ENCODE measurements at regions of chr1 and their contacts with region 1.

Region 1: DNA sequence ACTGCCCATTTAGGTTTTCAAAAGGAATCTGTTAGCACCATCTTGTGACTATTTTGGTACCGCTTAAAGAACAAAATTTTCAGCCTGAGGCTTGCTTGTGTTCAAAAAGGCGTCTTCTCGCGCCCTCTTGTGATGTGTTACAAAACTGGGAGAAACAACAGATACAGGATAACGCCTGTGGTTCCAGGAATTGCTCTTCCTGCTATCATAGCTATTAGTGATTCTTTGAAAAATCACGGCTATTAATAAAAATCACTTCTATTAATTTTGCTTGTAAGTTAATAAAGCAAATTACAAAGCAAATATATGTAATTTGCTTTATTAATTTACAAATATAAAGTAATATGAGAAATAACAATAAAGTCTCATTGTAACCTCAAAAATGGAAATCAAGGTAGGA is 82.2 kb upstream of the ABCD3 start:
- DNase-seq: peak; percentile 95
- ATAC-seq: peak; percentile 89
- H3K4me3 ChIP-seq: no peak overlapping the region
- H3K27ac ChIP-seq: no peak overlapping the region
- H3K4me1 ChIP-seq: peaks cover 8% of the 10 kb centered on the region
- H3K27me3 ChIP-seq: peaks cover 16% of the 10 kb centered on the region
- CTCF ChIP-seq: peak; percentile 100
- POLR2A ChIP-seq: peak; percentile 58
- RAD21 ChIP-seq: peak; percentile 100

Region 2: GRCh38 chr1:93909146-93910050 is 426.6 kb before region 1 on chr1 and contains the start of gene GCLM:
- CTCF ChIA-PET with region 1: no interaction called
- POLR2A ChIA-PET with region 1: no interaction called
- dilution Hi-C with region 1: no loop called
- in situ Hi-C with region 1: no loop called
- intact Hi-C with region 1: loop called (anchors 2 kb)
- DNase-seq: peak; percentile 94
- ATAC-seq: peak; percentile 94
- H3K4me3 ChIP-seq: peak within 1 kb of the TSS; percentile 74
- H3K27ac ChIP-seq: peak within 1 kb of the TSS; percentile 32
- H3K4me1 ChIP-seq: peaks cover 4% of the 10 kb centered on the region
- H3K27me3 ChIP-seq: no peaks in the 10 kb centered on the region
- CTCF ChIP-seq: peak; percentile 98
- POLR2A ChIP-seq: peak; percentile 92
- RAD21 ChIP-seq: peak; percentile 41; the same call in 1 of the 2 replicates
- total RNA-seq, gene GCLM: 18.3 and 20.1 TPM in 2 replicates

Region 3: DNA sequence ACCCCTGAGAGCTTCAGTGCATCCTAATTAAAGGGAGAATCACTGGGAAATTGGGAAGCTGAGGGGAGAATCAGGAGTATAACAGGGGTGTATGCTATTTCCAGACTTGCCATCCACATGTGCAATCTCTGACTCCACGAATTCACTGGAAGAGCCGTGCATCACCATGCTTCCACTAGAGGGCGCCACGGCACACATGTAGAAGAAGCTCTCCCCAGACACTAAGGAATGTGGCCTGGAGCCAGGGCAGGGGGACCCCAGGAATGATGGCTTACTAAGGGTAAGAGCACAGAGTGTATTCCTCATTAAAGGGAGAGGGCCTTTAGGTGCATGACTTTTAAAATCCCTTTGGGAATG is 296.5 kb before region 1 on chr1:
- CTCF ChIA-PET with region 1: interaction called, 64 read pairs
- POLR2A ChIA-PET with region 1: no interaction called
- dilution Hi-C with region 1: no loop called
- in situ Hi-C with region 1: no loop called
- intact Hi-C with region 1: no loop called
- DNase-seq: peak; percentile 62
- ATAC-seq: peak; percentile 22; the same call in 1 of the 2 replicates
- H3K4me3 ChIP-seq: no peak overlapping the region
- H3K27ac ChIP-seq: no peak overlapping the region
- H3K4me1 ChIP-seq: peaks cover 28% of the 10 kb centered on the region
- H3K27me3 ChIP-seq: no peaks in the 10 kb centered on the region
- CTCF ChIP-seq: peak; percentile 71
- POLR2A ChIP-seq: no peak
- RAD21 ChIP-seq: peak; percentile 59

Region 4: DNA sequence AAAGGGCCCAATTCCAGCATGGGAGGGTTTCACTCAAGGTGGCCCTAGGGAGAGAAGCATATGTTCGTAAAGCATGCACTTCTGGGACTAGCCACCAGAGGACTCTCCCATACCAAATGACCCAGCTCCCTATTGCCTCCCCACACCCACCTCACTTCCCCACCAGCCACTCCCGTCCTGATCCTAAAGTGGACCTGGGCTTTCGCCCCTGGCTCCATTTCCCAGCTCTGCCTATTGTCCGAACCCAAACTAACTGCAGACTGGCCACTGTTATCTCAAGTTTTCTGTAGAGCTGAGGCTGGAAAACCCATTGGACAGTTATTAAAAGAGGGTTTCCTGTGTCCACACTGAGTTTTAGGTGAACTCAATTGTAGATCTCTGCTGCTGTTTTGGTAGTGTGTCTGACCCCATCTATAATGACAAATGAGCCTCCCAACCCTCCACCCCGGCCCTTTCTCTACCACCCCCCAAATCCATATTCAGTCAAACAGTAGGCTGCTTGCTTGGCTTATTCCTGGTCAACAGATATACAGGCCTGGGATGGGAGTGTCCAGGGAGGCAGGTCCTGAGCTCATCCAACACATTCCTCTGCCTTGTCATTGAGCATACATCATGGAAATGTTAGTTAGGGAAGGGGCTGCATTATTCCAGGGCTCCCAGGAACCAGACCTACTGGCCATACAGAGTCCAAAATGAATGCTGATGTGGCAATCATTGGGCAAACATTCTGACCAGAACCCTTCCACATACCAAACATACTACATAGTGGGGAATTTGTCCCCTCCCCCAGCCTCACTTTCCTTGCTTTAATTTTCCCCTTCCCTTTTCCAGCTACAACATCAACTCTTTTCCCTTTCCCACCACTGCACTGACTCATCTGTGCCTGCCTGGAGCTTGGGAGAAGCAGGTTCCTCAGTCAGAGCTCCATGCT is 274.2 kb before region 1 on chr1:
- CTCF ChIA-PET with region 1: interaction called, 119 read pairs
- POLR2A ChIA-PET with region 1: interaction called, 3 read pairs
- dilution Hi-C with region 1: no loop called
- in situ Hi-C with region 1: loop called (anchors 5 kb)
- intact Hi-C with region 1: loop called (anchors 1 kb)
- DNase-seq: peak; percentile 80
- ATAC-seq: peak; percentile 95
- H3K4me3 ChIP-seq: no peak overlapping the region
- H3K27ac ChIP-seq: peak overlapping the region; percentile 18; the same call in 1 of the 2 replicates
- H3K4me1 ChIP-seq: peaks cover 19% of the 10 kb centered on the region
- H3K27me3 ChIP-seq: no peaks in the 10 kb centered on the region
- CTCF ChIP-seq: peak; percentile 95
- POLR2A ChIP-seq: peak; percentile 49; the same call in 1 of the 2 replicates
- RAD21 ChIP-seq: peak; percentile 95

Region 5: GRCh38 chr1:94284476-94284875 is 51.5 kb before region 1 on chr1:
- CTCF ChIA-PET with region 1: no interaction called
- POLR2A ChIA-PET with region 1: no interaction called
- dilution Hi-C with region 1: no loop called
- in situ Hi-C with region 1: no loop called
- intact Hi-C with region 1: no loop called
- DNase-seq: peak; percentile 48
- ATAC-seq: peak; percentile 59
- H3K4me3 ChIP-seq: no peak overlapping the region
- H3K27ac ChIP-seq: no peak overlapping the region
- H3K4me1 ChIP-seq: peaks cover 9% of the 10 kb centered on the region
- H3K27me3 ChIP-seq: no peaks in the 10 kb centered on the region
- CTCF ChIP-seq: no peak
- POLR2A ChIP-seq: no peak
- RAD21 ChIP-seq: no peak

Region 6: GRCh38 chr1:94351485-94351884 is 15.5 kb after region 1 on chr1:
- CTCF ChIA-PET with region 1: no interaction called
- POLR2A ChIA-PET with region 1: no interaction called
- dilution Hi-C with region 1: no loop called
- in situ Hi-C with region 1: no loop called
- intact Hi-C with region 1: no loop called
- DNase-seq: no peak
- ATAC-seq: no peak
- H3K4me3 ChIP-seq: no peak overlapping the region
- H3K27ac ChIP-seq: no peak overlapping the region
- H3K4me1 ChIP-seq: no peaks in the 10 kb centered on the region
- H3K27me3 ChIP-seq: peaks cover 41% of the 10 kb centered on the region
- CTCF ChIP-seq: no peak
- POLR2A ChIP-seq: no peak
- RAD21 ChIP-seq: no peak

Region 7: DNA sequence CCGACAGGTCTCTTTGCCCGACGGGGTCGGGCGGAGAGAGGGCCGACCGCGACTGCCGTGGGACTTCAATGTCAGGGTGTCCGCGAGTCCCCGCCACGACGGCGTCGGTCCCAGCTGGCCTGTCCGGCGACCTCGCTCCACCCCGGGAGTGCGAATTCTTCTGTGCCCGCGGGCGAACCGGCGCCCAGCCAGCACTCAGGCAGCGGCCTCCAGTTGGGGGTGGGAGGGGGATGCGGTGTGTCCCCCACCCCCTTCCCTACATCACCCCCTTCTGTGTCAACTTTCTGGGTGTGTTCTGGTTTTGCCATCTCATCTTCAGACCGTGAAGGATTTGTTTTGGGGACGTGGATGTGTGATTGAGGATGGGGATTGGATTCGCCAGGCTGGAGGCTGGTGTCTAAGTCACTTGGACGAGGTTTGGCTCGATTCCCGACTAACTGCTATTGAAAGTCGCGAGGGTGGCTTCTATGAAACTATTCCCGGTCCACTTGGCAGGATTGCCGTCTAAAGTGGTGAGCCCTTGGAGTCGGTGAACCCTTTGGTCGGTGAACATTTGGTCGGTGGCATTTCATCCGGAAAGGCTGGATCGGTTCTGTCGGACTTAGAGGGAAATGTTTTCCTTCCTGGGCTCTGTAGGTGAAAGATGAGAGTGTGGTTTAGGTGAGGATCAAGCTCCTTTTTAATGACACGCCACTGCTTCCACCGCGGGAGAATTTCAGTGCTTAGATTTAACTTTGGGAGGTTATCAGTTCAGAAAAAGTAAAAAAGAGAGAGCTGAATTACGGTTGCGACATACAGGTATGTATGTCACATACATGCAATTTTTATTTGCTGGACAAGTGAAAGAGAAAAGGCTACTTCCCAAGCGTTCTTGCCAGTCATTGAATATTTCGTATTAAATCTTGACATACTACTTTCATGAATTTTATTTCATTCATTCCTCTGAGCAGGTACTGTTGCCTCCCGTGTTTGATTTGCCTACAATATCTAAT is 83.0 kb after region 1 on chr1:
- CTCF ChIA-PET with region 1: interaction called, 3 read pairs
- POLR2A ChIA-PET with region 1: no interaction called
- dilution Hi-C with region 1: no loop called
- in situ Hi-C with region 1: no loop called
- intact Hi-C with region 1: loop called (anchors 1 kb)
- DNase-seq: peak; percentile 24
- ATAC-seq: peak; percentile 5; the same call in 1 of the 2 replicates
- H3K4me3 ChIP-seq: peak overlapping the region; percentile 82
- H3K27ac ChIP-seq: peak overlapping the region; percentile 88
- H3K4me1 ChIP-seq: peaks cover 8% of the 10 kb centered on the region
- H3K27me3 ChIP-seq: no peaks in the 10 kb centered on the region
- CTCF ChIP-seq: no peak
- POLR2A ChIP-seq: no peak
- RAD21 ChIP-seq: no peak

Measured in IMR-90 (cell line).